ENCODE measurements at regions of chr18 and their contacts with region 1.

Region 1: DNA sequence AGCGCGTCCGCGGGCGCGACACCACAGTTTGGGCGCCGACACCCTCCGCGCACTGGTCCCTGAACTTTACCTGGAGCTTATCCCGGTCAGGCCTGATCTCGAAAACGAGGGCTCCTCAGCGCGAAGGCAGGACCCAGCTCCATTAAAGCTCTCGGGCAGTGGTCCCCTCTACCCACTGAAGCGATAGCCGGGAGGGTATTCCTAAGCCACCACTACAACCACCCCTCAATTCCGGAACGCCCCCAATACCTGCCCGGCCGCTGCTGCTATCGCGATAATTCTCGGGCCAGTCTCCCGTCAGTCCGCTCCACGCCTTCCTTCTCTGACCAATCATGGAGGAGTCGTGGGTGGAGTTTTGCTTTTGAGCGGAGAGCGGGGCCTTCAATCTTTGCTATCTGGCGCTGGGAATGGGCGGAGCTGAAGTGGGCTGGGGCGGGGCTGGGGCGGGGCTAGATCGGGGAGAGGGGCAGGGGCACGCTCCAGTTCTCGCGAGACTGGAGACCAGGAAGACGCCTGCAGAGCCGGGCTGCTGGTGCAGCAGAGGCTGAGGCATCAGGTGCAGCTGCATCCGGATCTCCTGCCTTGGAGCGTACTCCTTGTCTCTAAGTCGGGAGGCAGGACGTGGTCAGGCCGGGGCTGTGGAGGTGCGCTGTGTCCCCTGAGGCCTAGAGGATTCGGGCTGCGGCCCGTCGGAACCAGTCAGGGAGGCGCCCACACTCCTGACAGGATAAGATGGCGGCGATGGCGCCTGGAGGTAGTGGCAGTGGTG is at the starts of genes PIGN and RELCH:
- DNase-seq: peak; percentile 73 to 98 (median 96)
- ATAC-seq: peak; percentile 97
- H3K4me3 ChIP-seq: peak within 1 kb of the TSS; percentile 97
- H3K4me3 Mint-ChIP-seq: peak within 1 kb of the TSS; percentile 96 to 100 (median 99)
- H3K27ac ChIP-seq: peak within 1 kb of the TSS; percentile 74
- H3K27ac Mint-ChIP-seq: peak within 1 kb of the TSS; percentile 91 to 98 (median 96)
- H3K4me1 ChIP-seq: peaks cover 18 to 21% of the 10 kb centered on the region in 2 donors
- H3K4me1 Mint-ChIP-seq: peaks cover 48 to 76% (median 69%) of the 10 kb centered on the region in 7 donors
- H3K27me3 ChIP-seq: no peaks in the 10 kb centered on the region
- H3K27me3 Mint-ChIP-seq: no peaks in the 10 kb centered on the region
- total RNA-seq, gene PIGN: 18.2 to 29.8 (median 28.2) TPM
- total RNA-seq, gene RELCH: 51.3 to 70.8 (median 62.1) TPM

Region 2: DNA sequence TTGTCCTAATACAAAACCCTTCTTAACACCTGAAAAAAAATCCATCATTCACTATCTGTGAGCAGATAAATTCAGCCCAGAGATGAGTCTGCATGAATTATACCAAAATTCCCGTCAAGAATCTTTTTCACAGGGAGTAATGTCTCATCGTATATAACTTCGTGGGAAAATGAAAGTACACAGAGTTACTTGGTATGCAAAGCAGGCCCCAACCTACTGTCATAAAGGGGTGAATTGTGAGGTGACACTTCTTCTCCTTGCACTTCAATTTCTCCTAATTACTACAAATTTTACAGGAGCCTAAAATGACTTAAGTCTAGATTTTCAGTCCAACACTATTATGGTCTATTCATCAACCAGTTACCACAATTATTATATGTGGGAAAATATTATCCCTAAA is 938.4 kb before region 1 on chr18:
- CTCF ChIA-PET with region 1: no interaction called
- POLR2A ChIA-PET with region 1: no interaction called
- intact Hi-C with region 1: no loop called
- DNase-seq: no peak
- ATAC-seq: no peak
- H3K4me3 ChIP-seq: no peak overlapping the region
- H3K4me3 Mint-ChIP-seq: no peak overlapping the region
- H3K27ac ChIP-seq: no peak overlapping the region
- H3K27ac Mint-ChIP-seq: no peak overlapping the region
- H3K4me1 ChIP-seq: no peaks in the 10 kb centered on the region
- H3K4me1 Mint-ChIP-seq: no peaks in the 10 kb centered on the region
- H3K27me3 ChIP-seq: no peaks in the 10 kb centered on the region
- H3K27me3 Mint-ChIP-seq: no peaks in the 10 kb centered on the region

Region 3: GRCh38 chr18:61972389-61973264 is 214.3 kb before region 1 on chr18:
- CTCF ChIA-PET with region 1: no interaction called
- POLR2A ChIA-PET with region 1: no interaction called
- intact Hi-C with region 1: loop called in 1 of 2 experiments (anchors 1 kb)
- DNase-seq: no peak
- ATAC-seq: peak; percentile 60
- H3K4me3 ChIP-seq: no peak overlapping the region
- H3K4me3 Mint-ChIP-seq: no peak overlapping the region
- H3K27ac ChIP-seq: no peak overlapping the region
- H3K27ac Mint-ChIP-seq: peak overlapping the region in 8 of 9 donors; percentile 0 to 75 (median 62)
- H3K4me1 ChIP-seq: peaks cover 3 to 6% of the 10 kb centered on the region in 2 donors
- H3K4me1 Mint-ChIP-seq: peaks cover 3 to 32% (median 17%) of the 10 kb centered on the region in 7 donors
- H3K27me3 ChIP-seq: no peaks in the 10 kb centered on the region
- H3K27me3 Mint-ChIP-seq: peaks cover 0 to 3% (median 0%) of the 10 kb centered on the region in 5 donors

Region 4: GRCh38 chr18:62080172-62080905 is 106.6 kb before region 1 on chr18:
- CTCF ChIA-PET with region 1: no interaction called
- POLR2A ChIA-PET with region 1: no interaction called
- intact Hi-C with region 1: no loop called
- DNase-seq: no peak
- ATAC-seq: no peak
- H3K4me3 ChIP-seq: no peak overlapping the region
- H3K4me3 Mint-ChIP-seq: no peak overlapping the region
- H3K27ac ChIP-seq: no peak overlapping the region
- H3K27ac Mint-ChIP-seq: no peak overlapping the region
- H3K4me1 ChIP-seq: no peaks in the 10 kb centered on the region
- H3K4me1 Mint-ChIP-seq: peaks cover 0 to 7% (median 0%) of the 10 kb centered on the region in 7 donors
- H3K27me3 ChIP-seq: no peaks in the 10 kb centered on the region
- H3K27me3 Mint-ChIP-seq: no peaks in the 10 kb centered on the region

Region 5: DNA sequence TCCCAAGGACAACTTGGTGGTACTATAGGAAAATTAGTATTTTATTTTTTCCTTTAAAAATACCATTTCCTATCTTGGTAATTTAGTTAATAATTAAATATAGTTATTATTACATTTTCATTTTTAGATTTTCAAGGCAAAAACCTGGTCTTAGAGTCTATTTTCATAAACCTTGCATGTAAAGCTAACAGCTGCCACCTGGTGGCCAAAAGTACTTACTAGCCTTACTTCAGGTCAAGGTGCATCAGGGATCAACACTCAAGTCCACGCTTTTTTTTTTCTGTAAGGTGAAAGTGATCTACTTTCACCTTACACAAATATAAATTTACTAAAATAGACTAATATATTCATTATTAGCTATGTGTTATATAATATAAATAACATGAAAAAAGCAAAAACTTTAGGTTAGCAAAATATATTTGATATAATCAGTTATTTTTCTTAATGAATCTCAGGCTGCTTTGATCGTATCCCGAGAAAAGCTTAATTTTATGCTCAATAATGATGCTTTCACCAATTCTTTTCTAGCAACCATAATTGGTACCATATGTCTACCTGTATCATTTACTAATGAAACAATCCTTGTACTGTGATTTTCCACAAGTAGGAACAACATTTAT is 62.6 kb after region 1 on chr18:
- CTCF ChIA-PET with region 1: interaction called, 92 read pairs
- POLR2A ChIA-PET with region 1: interaction called, 14 read pairs
- intact Hi-C with region 1: loop called (anchors 1 kb)
- DNase-seq: peak; percentile 20 to 67 (median 55)
- ATAC-seq: peak; percentile 60
- H3K4me3 ChIP-seq: no peak overlapping the region
- H3K4me3 Mint-ChIP-seq: no peak overlapping the region
- H3K27ac ChIP-seq: no peak overlapping the region
- H3K27ac Mint-ChIP-seq: no peak overlapping the region
- H3K4me1 ChIP-seq: no peaks in the 10 kb centered on the region
- H3K4me1 Mint-ChIP-seq: peaks cover 0 to 1% (median 0%) of the 10 kb centered on the region in 7 donors
- H3K27me3 ChIP-seq: no peaks in the 10 kb centered on the region
- H3K27me3 Mint-ChIP-seq: no peaks in the 10 kb centered on the region

Region 6: GRCh38 chr18:62505669-62506494 is 318.9 kb after region 1 on chr18:
- CTCF ChIA-PET with region 1: no interaction called
- POLR2A ChIA-PET with region 1: interaction called, 5 read pairs
- intact Hi-C with region 1: loop called (anchors 1 kb)
- DNase-seq: peak in 5 of 9 donors; percentile 37 to 49 (median 47)
- ATAC-seq: peak; percentile 58
- H3K4me3 ChIP-seq: peak overlapping the region; percentile 77
- H3K4me3 Mint-ChIP-seq: peak overlapping the region; percentile 82 to 94 (median 88)
- H3K27ac ChIP-seq: peak overlapping the region; percentile 67
- H3K27ac Mint-ChIP-seq: peak overlapping the region; percentile 90 to 100 (median 96)
- H3K4me1 ChIP-seq: peaks cover 5 to 17% of the 10 kb centered on the region in 2 donors
- H3K4me1 Mint-ChIP-seq: peaks cover 4 to 30% (median 21%) of the 10 kb centered on the region in 7 donors
- H3K27me3 ChIP-seq: no peaks in the 10 kb centered on the region
- H3K27me3 Mint-ChIP-seq: no peaks in the 10 kb centered on the region

Region 7: GRCh38 chr18:62844850-62845643 is 658.1 kb after region 1 on chr18:
- CTCF ChIA-PET with region 1: no interaction called
- POLR2A ChIA-PET with region 1: no interaction called
- intact Hi-C with region 1: loop called in 1 of 2 experiments (anchors 10 kb)
- DNase-seq: no peak
- ATAC-seq: no peak
- H3K4me3 ChIP-seq: no peak overlapping the region
- H3K4me3 Mint-ChIP-seq: peak overlapping the region in 1 of 10 donors; percentile 83
- H3K27ac ChIP-seq: no peak overlapping the region
- H3K27ac Mint-ChIP-seq: peak overlapping the region in 1 of 9 donors; percentile 90
- H3K4me1 ChIP-seq: no peaks in the 10 kb centered on the region
- H3K4me1 Mint-ChIP-seq: peaks cover 0 to 33% (median 0%) of the 10 kb centered on the region in 7 donors
- H3K27me3 ChIP-seq: no peaks in the 10 kb centered on the region
- H3K27me3 Mint-ChIP-seq: no peaks in the 10 kb centered on the region

Region 8: GRCh38 chr18:63367053-63367953 is 1180.3 kb after region 1 on chr18 and contains the start of gene KDSR:
- CTCF ChIA-PET with region 1: no interaction called
- POLR2A ChIA-PET with region 1: no interaction called
- intact Hi-C with region 1: loop called (anchors 1 to 10 kb)
- DNase-seq: peak; percentile 71 to 90 (median 79)
- ATAC-seq: peak; percentile 92
- H3K4me3 ChIP-seq: peak within 1 kb of the TSS; percentile 92
- H3K4me3 Mint-ChIP-seq: peak within 1 kb of the TSS; percentile 85 to 99 (median 94)
- H3K27ac ChIP-seq: peak within 1 kb of the TSS; percentile 77
- H3K27ac Mint-ChIP-seq: peak within 1 kb of the TSS; percentile 84 to 92 (median 89)
- H3K4me1 ChIP-seq: peaks cover 6 to 29% of the 10 kb centered on the region in 2 donors
- H3K4me1 Mint-ChIP-seq: peaks cover 32 to 56% (median 41%) of the 10 kb centered on the region in 7 donors
- H3K27me3 ChIP-seq: no peaks in the 10 kb centered on the region
- H3K27me3 Mint-ChIP-seq: no peaks in the 10 kb centered on the region
- total RNA-seq, gene KDSR: 24.4 to 57.9 (median 46.9) TPM

Region 9: GRCh38 chr18:63969960-63970802 is 1783.2 kb after region 1 on chr18 and contains the start of gene SERPINB8:
- CTCF ChIA-PET with region 1: no interaction called
- POLR2A ChIA-PET with region 1: interaction called, 3 read pairs
- intact Hi-C with region 1: loop called (anchors 1 to 10 kb)
- DNase-seq: peak; percentile 44 to 84 (median 77)
- ATAC-seq: peak; percentile 89
- H3K4me3 ChIP-seq: peak within 1 kb of the TSS; percentile 93
- H3K4me3 Mint-ChIP-seq: peak within 1 kb of the TSS; percentile 88 to 98 (median 94)
- H3K27ac ChIP-seq: peak within 1 kb of the TSS; percentile 96
- H3K27ac Mint-ChIP-seq: peak within 1 kb of the TSS; percentile 92 to 97 (median 94)
- H3K4me1 ChIP-seq: peaks cover 13% of the 10 kb centered on the region in 2 donors
- H3K4me1 Mint-ChIP-seq: peaks cover 26 to 42% (median 31%) of the 10 kb centered on the region in 7 donors
- H3K27me3 ChIP-seq: no peaks in the 10 kb centered on the region
- H3K27me3 Mint-ChIP-seq: peaks cover 0 to 25% (median 1%) of the 10 kb centered on the region in 5 donors
- total RNA-seq, gene SERPINB8: 9.2 to 15.7 (median 10.0) TPM